B cell (primary cell): ENCODE measurements at regions of chrX and their contacts with region 1.

Region 1: DNA sequence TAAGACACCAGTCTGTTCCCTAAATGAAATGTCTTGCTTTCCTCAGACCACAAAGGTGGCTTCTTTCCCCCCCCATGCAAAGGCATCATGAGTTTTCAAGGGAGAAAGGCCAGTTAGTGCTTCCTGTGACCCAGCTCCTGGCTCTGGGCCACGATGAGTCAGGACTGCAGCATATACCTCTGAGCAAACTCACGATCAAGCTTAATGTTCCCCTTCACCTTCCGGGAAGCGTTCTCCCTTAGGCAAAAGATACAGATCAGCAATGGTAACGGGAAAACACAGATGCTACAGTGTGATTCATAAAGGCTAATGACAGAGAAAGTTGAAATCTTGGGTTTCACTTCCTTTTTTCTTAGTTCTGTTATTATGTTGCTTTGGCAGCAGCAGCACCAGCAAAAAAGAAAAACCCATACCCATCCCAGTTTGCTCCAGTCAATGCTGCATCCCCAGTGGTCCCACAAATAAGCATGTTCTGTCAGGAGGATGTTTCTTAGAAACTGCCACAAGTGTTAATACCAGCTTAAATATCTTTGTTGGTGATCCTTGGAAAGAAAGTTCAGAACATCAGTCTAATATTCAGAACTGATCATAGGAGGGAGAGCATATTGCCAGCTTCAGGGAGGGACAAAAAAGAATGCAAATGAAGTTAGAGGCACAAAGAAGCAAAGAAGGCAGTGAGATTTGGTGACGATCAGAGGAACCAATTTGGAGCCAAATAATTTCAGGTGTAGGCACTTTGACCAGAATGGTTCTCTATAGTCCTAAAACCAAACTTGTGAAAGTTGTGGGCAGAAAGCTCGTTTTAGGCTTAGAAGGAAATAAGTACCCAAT is 41.2 kb downstream of the LONRF3 start:
- DNase-seq: peak; percentile 76
- ATAC-seq: peak; percentile 79
- H3K4me3 ChIP-seq: peak overlapping the region in 1 of 5 experiments; percentile 31
- H3K4me3 Mint-ChIP-seq: peak overlapping the region; percentile 32
- H3K27ac ChIP-seq: peak overlapping the region; percentile 66 to 72
- H3K27ac Mint-ChIP-seq: peak overlapping the region; percentile 95
- H3K4me1 ChIP-seq: peaks cover 16 to 21% of the 10 kb centered on the region in 2 donors
- H3K4me1 Mint-ChIP-seq: peaks cover 24% of the 10 kb centered on the region
- H3K27me3 ChIP-seq: no peaks in the 10 kb centered on the region
- H3K27me3 Mint-ChIP-seq: no peaks in the 10 kb centered on the region
- CTCF ChIP-seq: no peak

Region 2: GRCh38 chrX:118383120-118383519 is 632.5 kb before region 1 on chrX:
- CTCF ChIA-PET with region 1: no interaction called
- POLR2A ChIA-PET with region 1: no interaction called
- intact Hi-C with region 1: no loop called
- DNase-seq: no peak
- ATAC-seq: no peak
- H3K4me3 ChIP-seq: no peak overlapping the region
- H3K4me3 Mint-ChIP-seq: no peak overlapping the region
- H3K27ac ChIP-seq: no peak overlapping the region
- H3K27ac Mint-ChIP-seq: no peak overlapping the region
- H3K4me1 ChIP-seq: no peaks in the 10 kb centered on the region
- H3K4me1 Mint-ChIP-seq: no peaks in the 10 kb centered on the region
- H3K27me3 ChIP-seq: no peaks in the 10 kb centered on the region
- H3K27me3 Mint-ChIP-seq: no peaks in the 10 kb centered on the region
- CTCF ChIP-seq: no peak

Region 3: DNA sequence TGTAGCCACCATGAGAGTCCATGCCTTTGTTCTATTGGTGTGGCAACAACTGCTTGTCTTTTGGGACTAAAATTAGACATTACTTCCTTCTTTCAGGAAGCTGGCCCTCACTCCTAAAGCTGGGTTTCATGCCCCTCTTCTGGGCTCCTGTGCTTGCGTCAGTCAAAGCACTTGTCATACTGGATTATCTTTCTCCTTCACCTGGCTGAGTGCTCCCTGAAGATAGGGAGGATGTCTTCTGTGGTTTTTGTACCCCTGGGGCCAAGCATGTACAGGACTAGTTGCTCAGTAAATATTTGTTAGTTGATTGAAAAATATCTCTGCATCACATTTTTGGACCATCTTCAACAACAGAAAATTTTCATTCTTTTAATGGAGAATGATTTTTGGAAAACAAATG is 67.4 kb before region 1 on chrX:
- CTCF ChIA-PET with region 1: no interaction called
- POLR2A ChIA-PET with region 1: no interaction called
- intact Hi-C with region 1: no loop called
- DNase-seq: no peak
- ATAC-seq: no peak
- H3K4me3 ChIP-seq: no peak overlapping the region
- H3K4me3 Mint-ChIP-seq: no peak overlapping the region
- H3K27ac ChIP-seq: no peak overlapping the region
- H3K27ac Mint-ChIP-seq: no peak overlapping the region
- H3K4me1 ChIP-seq: no peaks in the 10 kb centered on the region
- H3K4me1 Mint-ChIP-seq: no peaks in the 10 kb centered on the region
- H3K27me3 ChIP-seq: no peaks in the 10 kb centered on the region
- H3K27me3 Mint-ChIP-seq: no peaks in the 10 kb centered on the region
- CTCF ChIP-seq: no peak

Region 4: GRCh38 chrX:118974088-118974907 is 41.3 kb before region 1 on chrX and contains the start of gene LONRF3:
- CTCF ChIA-PET with region 1: no interaction called
- POLR2A ChIA-PET with region 1: no interaction called
- intact Hi-C with region 1: loop called (anchors 2 kb)
- DNase-seq: peak; percentile 72
- ATAC-seq: peak; percentile 36
- H3K4me3 ChIP-seq: peak within 1 kb of the TSS; percentile 14 to 64 (median 51)
- H3K4me3 Mint-ChIP-seq: peak within 1 kb of the TSS; percentile 94
- H3K27ac ChIP-seq: no peak within 1 kb of the TSS
- H3K27ac Mint-ChIP-seq: peak within 1 kb of the TSS; percentile 85
- H3K4me1 ChIP-seq: peaks cover 19 to 31% of the 10 kb centered on the region in 2 donors
- H3K4me1 Mint-ChIP-seq: peaks cover 21% of the 10 kb centered on the region
- H3K27me3 ChIP-seq: peaks cover 0 to 52% (median 15%) of the 10 kb centered on the region in 4 experiments
- H3K27me3 Mint-ChIP-seq: peaks cover 18% of the 10 kb centered on the region
- CTCF ChIP-seq: no peak
- total RNA-seq, gene LONRF3: 1.2 and 1.7 TPM in 2 replicates